IMR-90 (cell line): ENCODE measurements at regions of chr14 and their contacts with region 1.

Region 1: GRCh38 chr14:89258728-89259273 is 158.2 kb downstream of the FOXN3 start:
- DNase-seq: no peak
- ATAC-seq: no peak
- H3K4me3 ChIP-seq: no peak overlapping the region
- H3K27ac ChIP-seq: no peak overlapping the region
- H3K4me1 ChIP-seq: peaks cover 1% of the 10 kb centered on the region; the same call in 1 of the 2 replicates
- H3K27me3 ChIP-seq: no peaks in the 10 kb centered on the region
- CTCF ChIP-seq: no peak
- POLR2A ChIP-seq: no peak
- RAD21 ChIP-seq: no peak

Region 2: GRCh38 chr14:89042021-89042420 is 216.8 kb before region 1 on chr14:
- CTCF ChIA-PET with region 1: no interaction called
- POLR2A ChIA-PET with region 1: no interaction called
- dilution Hi-C with region 1: no loop called
- in situ Hi-C with region 1: no loop called
- intact Hi-C with region 1: no loop called
- DNase-seq: no peak
- ATAC-seq: no peak
- H3K4me3 ChIP-seq: no peak overlapping the region
- H3K27ac ChIP-seq: no peak overlapping the region
- H3K4me1 ChIP-seq: peaks cover 3% of the 10 kb centered on the region; the same call in 1 of the 2 replicates
- H3K27me3 ChIP-seq: no peaks in the 10 kb centered on the region
- CTCF ChIP-seq: no peak
- POLR2A ChIP-seq: no peak
- RAD21 ChIP-seq: no peak

Region 3: DNA sequence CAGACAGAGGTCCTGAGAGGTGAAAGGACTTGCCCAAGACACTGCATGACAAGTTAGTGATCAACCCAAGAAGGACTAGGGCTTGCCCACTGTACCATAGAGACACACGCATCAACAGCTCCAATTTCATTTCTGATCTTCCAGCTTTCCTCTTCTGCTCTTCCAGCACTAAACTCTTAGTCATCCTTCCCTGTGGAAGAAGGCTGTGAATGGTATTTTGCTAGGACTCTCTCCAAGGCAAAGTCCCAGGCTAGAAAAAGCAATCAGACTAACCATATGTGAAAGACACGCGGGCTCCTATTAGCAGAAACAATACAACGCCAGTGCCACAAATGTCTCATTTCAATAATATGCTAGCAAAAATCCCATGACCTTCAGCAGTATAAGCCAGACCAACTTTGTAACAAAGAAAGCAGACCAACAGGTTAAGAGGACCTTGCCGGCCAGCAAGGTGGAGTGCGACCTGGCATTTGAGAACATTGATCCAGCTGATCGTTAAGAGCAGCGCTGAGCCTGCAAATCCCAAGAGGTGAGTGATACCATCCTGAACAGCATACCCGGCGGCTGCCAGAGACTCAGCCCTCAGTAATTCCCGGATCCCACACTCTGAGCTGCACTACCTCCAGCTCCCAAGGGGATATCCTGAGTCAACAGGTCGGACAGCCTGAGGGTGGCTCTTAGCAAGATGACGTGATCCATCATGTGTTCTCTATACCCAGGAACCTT is 25.7 kb after region 1 on chr14:
- CTCF ChIA-PET with region 1: no interaction called
- POLR2A ChIA-PET with region 1: no interaction called
- dilution Hi-C with region 1: no loop called
- in situ Hi-C with region 1: no loop called
- intact Hi-C with region 1: loop called (anchors 1 kb)
- DNase-seq: peak; percentile 63
- ATAC-seq: peak; percentile 37; the same call in 1 of the 2 replicates
- H3K4me3 ChIP-seq: no peak overlapping the region
- H3K27ac ChIP-seq: no peak overlapping the region
- H3K4me1 ChIP-seq: no peaks in the 10 kb centered on the region; the same call in 1 of the 2 replicates
- H3K27me3 ChIP-seq: no peaks in the 10 kb centered on the region
- CTCF ChIP-seq: no peak
- POLR2A ChIP-seq: no peak
- RAD21 ChIP-seq: no peak